B cell (primary cell): ENCODE measurements at regions of chr16 and their contacts with region 1.

Region 1: DNA sequence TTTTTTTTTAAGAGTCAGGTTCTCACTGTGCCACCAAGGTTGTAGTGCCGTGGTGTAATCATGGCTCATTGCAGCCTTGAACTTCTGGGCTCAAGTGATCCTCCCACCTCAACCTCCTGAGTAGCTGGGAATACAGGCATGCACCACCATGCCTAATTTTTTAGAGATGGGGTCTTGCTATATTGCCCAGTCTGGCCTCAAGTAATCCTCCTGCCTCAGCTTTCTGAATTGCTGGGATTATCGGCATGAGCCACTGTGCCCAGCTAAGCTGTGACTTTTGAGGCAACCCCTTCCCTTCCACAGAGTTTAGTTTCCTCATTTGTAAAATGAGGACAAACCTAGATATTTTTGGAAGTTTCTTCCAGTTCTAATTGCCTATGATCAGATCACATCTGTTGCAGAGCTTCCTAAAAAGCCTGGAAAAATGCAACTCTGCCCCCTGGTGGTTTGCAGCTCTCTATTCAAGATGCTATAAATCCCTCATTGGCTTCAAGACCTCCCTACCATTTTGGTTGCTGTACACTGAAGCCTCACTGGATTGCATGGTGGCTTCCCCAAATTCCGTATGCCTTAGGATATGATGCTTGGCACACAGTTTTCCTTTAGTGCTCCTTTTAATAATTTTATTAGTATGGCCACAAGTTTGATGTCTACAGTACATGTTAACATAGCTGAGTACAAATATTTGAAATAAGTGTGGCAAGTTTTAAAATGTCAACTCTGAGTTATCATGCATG is 19.3 kb downstream of the GDE1 start:
- DNase-seq: peak; percentile 76
- ATAC-seq: no peak
- H3K4me3 ChIP-seq: no peak overlapping the region
- H3K4me3 Mint-ChIP-seq: no peak overlapping the region
- H3K27ac ChIP-seq: no peak overlapping the region
- H3K27ac Mint-ChIP-seq: no peak overlapping the region
- H3K4me1 ChIP-seq: no peaks in the 10 kb centered on the region
- H3K4me1 Mint-ChIP-seq: no peaks in the 10 kb centered on the region
- H3K27me3 ChIP-seq: no peaks in the 10 kb centered on the region
- H3K27me3 Mint-ChIP-seq: no peaks in the 10 kb centered on the region
- CTCF ChIP-seq: peak; percentile 83

Region 2: DNA sequence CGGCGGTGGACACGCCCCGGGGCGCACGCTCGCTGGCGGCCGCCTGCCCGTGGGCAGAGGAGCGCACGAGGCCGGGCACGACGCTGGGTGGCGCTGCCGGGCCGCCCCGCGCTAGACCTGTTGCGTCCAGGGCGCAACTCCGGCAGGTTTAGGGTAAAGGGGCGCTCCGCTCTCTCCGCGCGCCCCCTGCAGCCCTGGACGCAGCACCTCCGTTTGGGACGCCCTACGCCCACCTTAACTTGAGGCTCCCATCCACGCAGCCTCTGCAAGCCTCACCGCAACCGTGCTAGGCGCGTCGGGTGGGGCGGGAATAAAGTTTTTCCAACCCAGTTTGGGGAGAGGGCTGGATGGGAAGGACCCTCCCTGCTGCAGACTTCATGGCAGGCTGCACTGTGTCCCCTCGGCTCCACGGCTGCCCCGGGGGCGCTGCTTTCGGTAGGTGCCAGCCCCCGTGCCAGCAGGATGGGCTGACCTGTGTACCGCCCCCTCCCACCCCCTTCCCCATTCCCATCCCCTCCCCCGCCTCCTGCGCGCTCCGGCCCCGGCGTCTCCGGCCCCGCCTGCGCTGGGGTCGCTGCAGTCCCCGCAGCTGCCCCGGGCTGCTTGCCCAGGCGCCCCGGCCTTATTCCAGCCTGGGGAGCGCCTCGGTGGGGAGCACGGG is 334.7 kb before region 1 on chr16 and contains the start of gene SYT17:
- CTCF ChIA-PET with region 1: interaction called, 4 read pairs
- POLR2A ChIA-PET with region 1: interaction called, 5 read pairs
- intact Hi-C with region 1: loop called (anchors 1 kb)
- DNase-seq: peak; percentile 85
- ATAC-seq: peak; percentile 88
- H3K4me3 ChIP-seq: peak within 1 kb of the TSS in 4 of 5 experiments; percentile 50 to 69 (median 59)
- H3K4me3 Mint-ChIP-seq: peak within 1 kb of the TSS; percentile 85
- H3K27ac ChIP-seq: peak within 1 kb of the TSS in 1 of 2 donors; percentile 3
- H3K27ac Mint-ChIP-seq: peak within 1 kb of the TSS; percentile 81
- H3K4me1 ChIP-seq: peaks cover 11 to 28% of the 10 kb centered on the region in 2 donors
- H3K4me1 Mint-ChIP-seq: peaks cover 30% of the 10 kb centered on the region
- H3K27me3 ChIP-seq: peaks cover 0 to 16% (median 0%) of the 10 kb centered on the region in 4 experiments
- H3K27me3 Mint-ChIP-seq: peaks cover 11% of the 10 kb centered on the region
- CTCF ChIP-seq: peak; percentile 82
- total RNA-seq, gene SYT17: 25.1 and 27.7 TPM in 2 replicates

Region 3: DNA sequence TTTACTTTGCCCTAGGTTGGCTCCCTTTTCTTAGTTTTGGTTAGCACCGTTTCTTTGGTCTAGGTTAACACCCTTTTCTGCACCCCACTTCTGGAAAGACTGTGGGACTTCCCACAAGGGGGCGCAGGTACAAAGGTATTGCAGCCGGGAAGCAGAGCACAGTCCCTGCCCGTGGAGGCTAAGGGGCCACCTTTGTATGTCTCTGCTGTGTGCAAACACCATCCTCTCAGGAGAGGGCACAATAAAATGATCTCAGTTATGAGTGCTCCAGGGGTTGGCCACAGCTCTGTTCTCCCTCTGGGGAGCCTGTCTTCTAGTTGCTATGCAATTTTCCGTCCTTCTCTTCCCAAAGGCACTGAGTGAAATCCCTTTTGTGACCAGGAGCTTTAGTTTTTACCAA is 113.3 kb before region 1 on chr16:
- CTCF ChIA-PET with region 1: interaction called, 71 read pairs
- POLR2A ChIA-PET with region 1: no interaction called
- intact Hi-C with region 1: loop called (anchors 1 kb)
- DNase-seq: peak; percentile 61
- ATAC-seq: peak; percentile 57
- H3K4me3 ChIP-seq: no peak overlapping the region
- H3K4me3 Mint-ChIP-seq: no peak overlapping the region
- H3K27ac ChIP-seq: no peak overlapping the region
- H3K27ac Mint-ChIP-seq: no peak overlapping the region
- H3K4me1 ChIP-seq: no peaks in the 10 kb centered on the region
- H3K4me1 Mint-ChIP-seq: no peaks in the 10 kb centered on the region
- H3K27me3 ChIP-seq: peaks cover 0 to 6% (median 1%) of the 10 kb centered on the region in 4 experiments
- H3K27me3 Mint-ChIP-seq: peaks cover 47% of the 10 kb centered on the region
- CTCF ChIP-seq: peak; percentile 49

Region 4: GRCh38 chr16:19540241-19540965 is 37.8 kb after region 1 on chr16:
- CTCF ChIA-PET with region 1: no interaction called
- POLR2A ChIA-PET with region 1: no interaction called
- intact Hi-C with region 1: no loop called
- DNase-seq: no peak
- ATAC-seq: no peak
- H3K4me3 ChIP-seq: no peak overlapping the region
- H3K4me3 Mint-ChIP-seq: no peak overlapping the region
- H3K27ac ChIP-seq: no peak overlapping the region
- H3K27ac Mint-ChIP-seq: no peak overlapping the region
- H3K4me1 ChIP-seq: no peaks in the 10 kb centered on the region
- H3K4me1 Mint-ChIP-seq: no peaks in the 10 kb centered on the region
- H3K27me3 ChIP-seq: no peaks in the 10 kb centered on the region
- H3K27me3 Mint-ChIP-seq: no peaks in the 10 kb centered on the region
- CTCF ChIP-seq: no peak